ENCODE measurements at regions of chr14 and their contacts with region 1.

Region 1: GRCh38 chr14:75440733-75441477 is 13.1 kb downstream of the JDP2 start:
- DNase-seq: no peak
- H3K4me3 ChIP-seq: no peak overlapping the region
- H3K27ac ChIP-seq: no peak overlapping the region
- H3K4me1 ChIP-seq: peaks cover 25% of the 10 kb centered on the region
- H3K27me3 ChIP-seq: no peaks in the 10 kb centered on the region
- CTCF ChIP-seq: no peak

Region 2: GRCh38 chr14:75283882-75284563 is 156.9 kb before region 1 on chr14:
- CTCF ChIA-PET with region 1: no interaction called
- POLR2A ChIA-PET with region 1: interaction called, 12 read pairs
- intact Hi-C with region 1: no loop called
- DNase-seq: peak; percentile 49 to 78
- H3K4me3 ChIP-seq: no peak overlapping the region
- H3K27ac ChIP-seq: peak overlapping the region; percentile 46
- H3K4me1 ChIP-seq: peaks cover 47% of the 10 kb centered on the region
- H3K27me3 ChIP-seq: no peaks in the 10 kb centered on the region
- CTCF ChIP-seq: no peak; the same call in 1 of the 2 replicates

Region 3: GRCh38 chr14:75301666-75302325 is 139.1 kb before region 1 on chr14:
- CTCF ChIA-PET with region 1: interaction called, 11 read pairs
- POLR2A ChIA-PET with region 1: no interaction called
- intact Hi-C with region 1: no loop called
- DNase-seq: no peak
- H3K4me3 ChIP-seq: no peak overlapping the region
- H3K27ac ChIP-seq: no peak overlapping the region
- H3K4me1 ChIP-seq: peaks cover 22% of the 10 kb centered on the region
- H3K27me3 ChIP-seq: no peaks in the 10 kb centered on the region
- CTCF ChIP-seq: no peak

Region 4: GRCh38 chr14:75399821-75400678 is 40.9 kb before region 1 on chr14:
- CTCF ChIA-PET with region 1: no interaction called
- POLR2A ChIA-PET with region 1: interaction called, 5 read pairs
- intact Hi-C with region 1: loop called (anchors 1 kb)
- DNase-seq: peak; percentile 100
- H3K4me3 ChIP-seq: peak overlapping the region; percentile 17; the same call in 1 of the 2 replicates
- H3K27ac ChIP-seq: peak overlapping the region; percentile 70
- H3K4me1 ChIP-seq: peaks cover 31% of the 10 kb centered on the region
- H3K27me3 ChIP-seq: no peaks in the 10 kb centered on the region
- CTCF ChIP-seq: no peak

Region 5: GRCh38 chr14:75487155-75487671 is 46.3 kb after region 1 on chr14:
- CTCF ChIA-PET with region 1: interaction called, 4 read pairs
- POLR2A ChIA-PET with region 1: interaction called, 5 read pairs
- intact Hi-C with region 1: loop called (anchors 1 kb)
- DNase-seq: peak; percentile 83 to 99
- H3K4me3 ChIP-seq: no peak overlapping the region
- H3K27ac ChIP-seq: 0 out of 2 replicates have a peak overlapping the region, but pooled peaks have one; percentile 5
- H3K4me1 ChIP-seq: peaks cover 18% of the 10 kb centered on the region
- H3K27me3 ChIP-seq: no peaks in the 10 kb centered on the region
- CTCF ChIP-seq: no peak

Measured in PC-9 (cell line).